Heart left ventricle (tissue), 16 donors: ENCODE measurements at regions of chr20 and their contacts with region 1.

Region 1: GRCh38 chr20:24781422-24781980 is 167.6 kb upstream of the CST7 start:
- DNase-seq: no peak
- ATAC-seq: peak in 3 of 4 donors; percentile 70 to 88 (median 72)
- H3K4me3 ChIP-seq: no peak overlapping the region
- H3K27ac ChIP-seq: no peak overlapping the region
- H3K4me1 ChIP-seq: no peaks in the 10 kb centered on the region
- H3K27me3 ChIP-seq: peaks cover 0 to 3% (median 0%) of the 10 kb centered on the region in 9 donors
- CTCF ChIP-seq: peak; percentile 26 to 59 (median 48)
- POLR2A ChIP-seq: no peak

Region 2: DNA sequence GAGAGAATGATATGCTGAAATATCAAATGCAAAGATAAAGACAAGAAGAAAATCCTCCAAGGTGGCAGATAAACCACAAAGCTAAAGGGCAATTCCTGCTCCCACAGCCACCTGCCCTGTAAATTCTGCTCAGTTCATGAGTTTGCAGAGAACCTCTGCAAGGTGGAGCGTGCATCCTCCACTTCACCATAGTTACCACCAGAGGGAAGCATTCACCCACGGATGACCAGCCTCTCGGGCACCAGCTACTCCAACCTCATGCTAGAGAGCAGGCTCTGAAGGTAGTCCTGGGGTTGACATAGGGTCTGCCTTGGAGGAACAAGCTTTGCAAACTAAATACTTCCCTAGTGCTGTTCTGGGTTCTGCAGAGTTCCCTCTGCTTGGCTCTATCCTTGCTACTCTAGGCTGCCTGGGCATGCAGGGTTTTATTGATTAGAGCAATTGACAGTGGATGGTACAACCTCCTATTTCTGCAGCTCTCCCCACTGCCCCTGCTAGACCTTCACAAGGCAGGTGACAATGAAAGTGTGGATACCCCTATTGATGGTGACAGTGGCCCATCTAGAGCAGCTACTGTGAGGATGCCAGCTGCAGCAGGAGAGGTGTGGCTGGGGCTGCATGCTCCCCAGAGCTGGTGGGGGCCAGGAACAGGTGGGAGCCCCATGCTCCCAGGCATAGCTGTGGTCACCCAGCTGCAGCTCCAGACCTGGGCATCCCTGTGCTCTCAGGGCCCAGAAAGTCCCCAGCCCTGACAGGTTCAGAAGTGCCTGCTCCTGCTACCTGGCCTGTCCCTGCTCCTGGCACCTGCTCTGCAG is 844.0 kb before region 1 on chr20:
- intact Hi-C with region 1: loop called in 1 of 10 experiments (anchors 10 kb)
- DNase-seq: peak in 4 of 5 donors; percentile 30 to 52 (median 41)
- ATAC-seq: peak; percentile 81 to 94 (median 92)
- H3K4me3 ChIP-seq: no peak overlapping the region
- H3K27ac ChIP-seq: no peak overlapping the region
- H3K4me1 ChIP-seq: peaks cover 0 to 6% (median 0%) of the 10 kb centered on the region in 12 donors
- H3K27me3 ChIP-seq: peaks cover 0 to 7% (median 0%) of the 10 kb centered on the region in 9 donors
- CTCF ChIP-seq: peak; percentile 60 to 83 (median 77)
- POLR2A ChIP-seq: no peak

Region 3: DNA sequence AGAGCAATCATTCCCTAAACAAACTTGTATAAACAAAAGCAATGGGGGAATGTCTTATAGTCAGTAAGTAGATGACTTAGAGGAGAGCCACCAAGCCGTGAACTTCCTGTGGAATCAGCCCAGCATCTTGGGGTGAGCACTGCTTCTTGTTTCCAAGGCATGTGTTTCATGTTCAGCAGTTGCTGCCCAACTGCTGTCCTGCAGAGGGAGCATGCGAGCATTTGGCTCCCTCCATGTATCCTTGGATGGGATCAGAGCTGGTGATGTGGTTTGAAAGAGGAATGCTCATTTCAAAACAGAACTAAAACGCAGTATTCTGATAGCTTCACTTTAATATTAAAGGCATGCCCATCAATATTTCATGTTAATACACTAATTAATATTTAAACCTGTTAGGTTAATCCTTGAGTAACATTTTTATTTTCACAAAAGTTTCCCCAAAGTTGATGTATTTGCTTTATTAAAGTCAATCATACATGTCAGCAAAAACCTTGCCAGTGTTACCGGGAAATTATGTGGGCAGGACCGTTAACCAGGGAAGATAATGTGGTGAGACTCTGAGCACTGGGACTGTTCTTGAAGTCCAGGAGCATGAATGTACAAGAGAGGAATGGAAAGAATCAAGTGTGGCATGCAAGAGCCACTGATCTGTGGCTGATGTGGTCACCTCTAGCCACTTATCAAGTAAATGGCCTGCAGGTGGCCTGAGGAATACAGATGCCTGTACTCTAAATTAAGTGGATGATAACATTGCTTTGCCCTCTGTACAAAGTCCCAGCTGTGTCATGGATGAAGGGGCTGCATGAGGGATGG is 620.7 kb before region 1 on chr20:
- intact Hi-C with region 1: loop called in 5 of 10 experiments (anchors 2 to 10 kb)
- DNase-seq: peak in 3 of 5 donors; percentile 14 to 42 (median 39)
- ATAC-seq: peak in 3 of 4 donors; percentile 48 to 84 (median 73)
- H3K4me3 ChIP-seq: no peak overlapping the region
- H3K27ac ChIP-seq: no peak overlapping the region
- H3K4me1 ChIP-seq: peaks cover 0 to 5% (median 0%) of the 10 kb centered on the region in 12 donors
- H3K27me3 ChIP-seq: no peaks in the 10 kb centered on the region
- CTCF ChIP-seq: peak; percentile 49 to 88 (median 70)
- POLR2A ChIP-seq: no peak

Region 4: GRCh38 chr20:24303381-24303780 is 478.1 kb before region 1 on chr20:
- intact Hi-C with region 1: loop called in 3 of 10 experiments (anchors 5 to 10 kb)
- DNase-seq: no peak
- ATAC-seq: peak in 2 of 4 donors; percentile 36 to 41
- H3K4me3 ChIP-seq: no peak overlapping the region
- H3K27ac ChIP-seq: no peak overlapping the region
- H3K4me1 ChIP-seq: no peaks in the 10 kb centered on the region
- H3K27me3 ChIP-seq: peaks cover 0 to 8% (median under 1%) of the 10 kb centered on the region in 9 donors
- CTCF ChIP-seq: peak in 9 of 12 donors; percentile 9 to 38 (median 24)
- POLR2A ChIP-seq: no peak

Region 5: GRCh38 chr20:24309596-24309995 is 471.9 kb before region 1 on chr20:
- intact Hi-C with region 1: loop called in 3 of 10 experiments (anchors 5 to 10 kb)
- DNase-seq: no peak
- ATAC-seq: no peak
- H3K4me3 ChIP-seq: no peak overlapping the region
- H3K27ac ChIP-seq: no peak overlapping the region
- H3K4me1 ChIP-seq: no peaks in the 10 kb centered on the region
- H3K27me3 ChIP-seq: peaks cover 0 to 7% (median 0%) of the 10 kb centered on the region in 9 donors
- CTCF ChIP-seq: no peak
- POLR2A ChIP-seq: no peak

Region 6: DNA sequence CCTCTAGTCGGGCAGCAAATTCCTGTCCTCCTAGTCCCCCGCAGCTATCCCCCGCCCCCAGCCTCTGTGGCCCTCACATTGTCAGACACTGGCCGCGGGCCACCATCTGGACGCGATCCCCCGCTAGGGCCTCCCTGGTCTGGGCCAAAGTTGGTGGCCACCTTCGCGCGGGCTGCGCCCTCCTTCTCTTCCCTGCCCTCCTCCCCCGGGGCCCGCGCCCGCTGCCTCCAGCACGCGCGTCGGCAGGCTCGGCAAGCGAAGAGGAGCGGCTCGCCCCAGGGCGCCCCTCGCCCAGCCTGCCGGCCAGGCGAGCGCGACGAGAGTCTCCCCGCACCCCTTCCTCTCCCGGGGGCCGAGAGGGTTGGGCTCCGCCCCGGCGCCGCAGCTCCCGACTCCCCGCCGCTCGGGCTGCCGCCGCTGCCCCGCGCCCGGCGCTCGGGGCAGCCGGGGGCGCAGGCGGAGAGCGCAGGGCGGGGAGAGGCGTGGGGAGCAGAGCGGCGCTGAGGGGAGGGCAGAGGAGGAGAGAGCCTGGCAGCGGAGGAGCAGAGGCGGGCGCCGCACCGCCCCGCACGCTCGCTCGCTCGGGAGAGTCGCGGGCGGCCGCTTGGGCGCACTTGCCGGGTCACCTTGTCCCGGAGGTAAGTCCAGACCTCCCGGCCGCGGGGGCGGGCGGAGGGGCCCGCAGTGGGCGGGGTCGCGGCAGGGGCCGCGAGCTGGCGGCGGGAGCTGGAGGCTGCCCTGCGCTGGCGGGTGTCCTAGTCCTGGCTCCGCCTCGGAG is 312.2 kb before region 1 on chr20 and contains the start of gene SYNDIG1:
- intact Hi-C with region 1: loop called in 1 of 10 experiments (anchors 10 kb)
- DNase-seq: peak in 4 of 5 donors; percentile 38 to 67 (median 53)
- ATAC-seq: peak in 3 of 4 donors; percentile 33 to 75 (median 69)
- H3K4me3 ChIP-seq: peak within 1 kb of the TSS; percentile 37 to 67 (median 58)
- H3K27ac ChIP-seq: peak within 1 kb of the TSS; percentile 49 to 90 (median 79)
- H3K4me1 ChIP-seq: peaks cover 0 to 49% (median 4%) of the 10 kb centered on the region in 12 donors
- H3K27me3 ChIP-seq: peaks cover 0 to 48% (median 7%) of the 10 kb centered on the region in 9 donors
- CTCF ChIP-seq: no peak
- POLR2A ChIP-seq: peak in 1 of 2 donors; percentile 22
- total RNA-seq, gene SYNDIG1: 14.1 to 41.8 (median 24.2) TPM